ENCODE measurements at regions of chr16 and their contacts with region 1.

Region 1: GRCh38 chr16:89641458-89642119 is 15.9 kb downstream of the CHMP1A start:
- DNase-seq: no peak
- ATAC-seq: no peak
- H3K4me3 Mint-ChIP-seq: no peak overlapping the region
- H3K27ac Mint-ChIP-seq: no peak overlapping the region
- H3K4me1 Mint-ChIP-seq: peaks cover 11% of the 10 kb centered on the region
- H3K27me3 Mint-ChIP-seq: no peaks in the 10 kb centered on the region

Region 2: DNA sequence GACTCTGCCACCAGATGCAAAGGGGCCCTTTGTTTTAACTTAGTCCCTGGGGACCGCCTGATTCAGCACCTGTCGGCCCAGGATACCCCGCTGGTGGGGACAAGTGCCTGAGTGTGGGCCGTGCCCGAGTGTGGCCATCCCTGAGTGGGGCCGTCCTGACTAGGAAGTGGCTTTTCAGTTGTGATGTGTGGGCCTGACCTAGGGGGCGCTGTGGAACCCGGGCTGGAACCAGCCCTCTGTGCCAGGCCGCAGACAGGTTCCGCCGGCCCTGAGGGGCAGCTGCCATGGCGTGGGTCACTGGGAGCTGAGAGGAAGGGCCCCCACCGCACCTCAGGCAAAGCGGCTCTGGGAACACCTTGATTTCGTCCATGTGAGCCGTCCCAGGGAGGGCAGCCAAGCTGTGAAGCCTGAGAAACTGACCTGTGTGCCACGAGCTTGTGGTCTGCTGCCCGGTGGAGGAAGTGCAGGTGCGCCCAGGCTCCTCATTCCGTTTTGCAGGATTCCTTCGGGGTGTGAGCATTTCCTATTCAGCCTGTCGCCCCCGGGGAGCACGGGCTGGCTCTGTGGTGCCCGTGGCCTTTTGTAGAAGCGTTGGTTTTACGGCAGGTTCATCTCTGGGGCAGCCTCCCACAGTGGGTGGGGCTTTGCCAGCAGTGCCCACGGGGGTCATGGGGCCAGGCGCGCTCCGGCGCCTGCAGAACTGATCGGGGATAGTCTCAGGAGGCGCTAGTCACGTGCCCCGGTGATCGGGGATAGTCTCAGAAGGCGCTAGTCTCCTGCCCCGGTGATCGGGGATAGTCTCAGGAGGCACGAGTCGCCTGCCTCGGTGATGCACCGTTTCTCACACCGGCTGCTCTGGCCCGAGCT is 75.8 kb before region 1 on chr16:
- CTCF ChIA-PET with region 1: interaction called, 3 read pairs
- POLR2A ChIA-PET with region 1: no interaction called
- intact Hi-C with region 1: loop called in 1 of 2 experiments (anchors 2 kb)
- DNase-seq: peak; percentile 73
- ATAC-seq: peak; percentile 52
- H3K4me3 Mint-ChIP-seq: peak overlapping the region; percentile 95
- H3K27ac Mint-ChIP-seq: peak overlapping the region; percentile 61
- H3K4me1 Mint-ChIP-seq: peaks cover 47% of the 10 kb centered on the region
- H3K27me3 Mint-ChIP-seq: no peaks in the 10 kb centered on the region

Region 3: DNA sequence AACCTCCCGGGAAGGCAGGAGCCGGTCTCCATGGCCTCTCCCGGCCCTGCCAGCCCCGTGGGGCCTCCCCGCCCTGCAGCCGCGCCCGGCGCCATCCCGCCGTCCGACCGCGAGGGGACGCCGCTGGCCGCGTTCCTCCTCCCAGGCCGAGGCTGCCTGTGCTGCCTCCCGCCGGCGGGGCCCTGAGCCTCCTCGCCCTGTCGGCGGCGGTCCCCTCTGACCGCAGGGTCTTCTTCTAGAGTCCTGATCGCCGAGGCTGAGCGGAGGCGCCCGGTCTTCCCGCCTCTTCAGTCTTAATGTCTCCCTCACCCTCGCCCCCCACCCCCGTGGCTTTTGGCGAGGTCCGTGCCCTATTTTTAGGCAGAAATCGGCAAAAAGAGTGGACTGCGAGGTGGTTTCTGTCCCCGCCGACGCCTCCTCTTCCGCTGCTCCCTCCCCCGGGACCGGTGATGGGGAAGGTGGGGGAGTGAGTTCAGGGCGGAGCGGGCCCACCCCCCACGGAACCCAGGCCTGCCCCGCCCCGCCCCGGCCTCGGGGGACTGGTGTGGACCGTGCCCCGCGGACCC is 66.8 kb before region 1 on chr16:
- CTCF ChIA-PET with region 1: no interaction called
- POLR2A ChIA-PET with region 1: no interaction called
- intact Hi-C with region 1: loop called (anchors 1 to 2 kb)
- DNase-seq: peak; percentile 82
- ATAC-seq: peak; percentile 86
- H3K4me3 Mint-ChIP-seq: peak overlapping the region; percentile 39
- H3K27ac Mint-ChIP-seq: no peak overlapping the region
- H3K4me1 Mint-ChIP-seq: peaks cover 12% of the 10 kb centered on the region
- H3K27me3 Mint-ChIP-seq: peaks cover 3% of the 10 kb centered on the region

Region 4: DNA sequence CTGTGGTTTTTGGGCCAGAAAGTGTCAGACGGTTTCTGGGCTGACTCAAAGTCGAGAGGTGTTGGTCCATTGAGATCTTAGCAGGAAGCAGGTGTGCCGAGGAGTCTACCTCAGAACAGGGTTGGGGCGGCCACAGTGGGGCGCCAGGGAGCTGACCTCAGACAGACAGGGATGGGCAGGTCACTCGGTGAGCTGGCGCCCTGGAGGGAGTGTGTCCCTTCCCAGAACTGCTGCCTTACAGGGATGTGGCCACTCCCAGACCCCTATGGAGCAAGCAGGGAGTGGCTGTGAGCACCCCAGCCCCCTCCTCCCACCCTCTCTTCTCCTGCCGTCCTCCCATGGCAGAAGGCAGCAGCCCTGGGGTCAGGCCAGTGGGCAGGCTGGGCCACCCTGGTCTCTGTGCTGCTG is 42.1 kb before region 1 on chr16:
- CTCF ChIA-PET with region 1: no interaction called
- POLR2A ChIA-PET with region 1: no interaction called
- intact Hi-C with region 1: loop called in 1 of 2 experiments (anchors 1 kb)
- DNase-seq: peak; percentile 73
- ATAC-seq: peak; percentile 45
- H3K4me3 Mint-ChIP-seq: no peak overlapping the region
- H3K27ac Mint-ChIP-seq: no peak overlapping the region
- H3K4me1 Mint-ChIP-seq: peaks cover 16% of the 10 kb centered on the region
- H3K27me3 Mint-ChIP-seq: no peaks in the 10 kb centered on the region

Region 5: DNA sequence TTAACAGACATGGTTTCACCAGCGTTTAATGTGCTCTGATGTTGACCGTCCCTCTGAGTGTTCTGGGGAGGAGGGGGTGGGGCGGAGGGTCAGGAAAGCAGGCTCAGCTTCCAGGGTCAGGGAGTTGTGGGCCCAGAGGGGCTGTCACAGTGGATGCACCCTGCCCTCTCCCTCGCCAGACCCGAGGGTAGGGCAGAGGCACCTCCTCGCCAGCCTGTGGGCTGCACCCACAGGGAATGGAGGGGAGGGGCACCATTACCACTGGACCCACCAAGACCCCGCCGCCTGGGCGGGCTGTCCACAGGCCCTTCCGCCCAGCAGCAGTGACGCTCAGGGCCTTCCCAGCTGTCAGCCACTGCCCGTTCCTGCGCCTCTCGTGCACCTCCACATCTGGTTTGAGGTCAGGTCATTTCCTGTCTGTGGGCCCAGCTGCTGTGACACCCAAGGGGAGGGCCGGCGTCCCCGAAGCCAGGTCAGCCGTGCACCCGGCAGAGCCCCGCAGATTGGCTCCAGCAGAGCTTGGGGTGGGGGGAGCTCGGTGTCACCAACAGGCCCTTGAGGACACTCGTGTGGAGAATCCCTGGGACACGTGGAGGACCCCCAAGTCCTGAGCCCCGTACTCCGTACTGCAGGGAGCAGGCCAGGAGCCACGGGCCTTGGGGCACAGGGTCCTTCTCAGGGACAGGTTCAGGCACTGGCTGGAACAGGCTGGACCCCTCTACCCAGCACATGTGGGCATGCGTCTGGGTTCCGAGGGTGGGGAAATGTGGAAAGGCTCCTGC is 54.9 kb after region 1 on chr16:
- CTCF ChIA-PET with region 1: no interaction called
- POLR2A ChIA-PET with region 1: no interaction called
- intact Hi-C with region 1: no loop called
- DNase-seq: peak; percentile 32
- ATAC-seq: no peak
- H3K4me3 Mint-ChIP-seq: no peak overlapping the region
- H3K27ac Mint-ChIP-seq: no peak overlapping the region
- H3K4me1 Mint-ChIP-seq: peaks cover 6% of the 10 kb centered on the region
- H3K27me3 Mint-ChIP-seq: no peaks in the 10 kb centered on the region

Measured in activated CD4-positive, alpha-beta T cell treated with anti-CD3 and anti-CD28 coated beads for 36 hours (primary cell).